BJ (cell line): ENCODE measurements at regions of chr19 and their contacts with region 1.

Region 1: DNA sequence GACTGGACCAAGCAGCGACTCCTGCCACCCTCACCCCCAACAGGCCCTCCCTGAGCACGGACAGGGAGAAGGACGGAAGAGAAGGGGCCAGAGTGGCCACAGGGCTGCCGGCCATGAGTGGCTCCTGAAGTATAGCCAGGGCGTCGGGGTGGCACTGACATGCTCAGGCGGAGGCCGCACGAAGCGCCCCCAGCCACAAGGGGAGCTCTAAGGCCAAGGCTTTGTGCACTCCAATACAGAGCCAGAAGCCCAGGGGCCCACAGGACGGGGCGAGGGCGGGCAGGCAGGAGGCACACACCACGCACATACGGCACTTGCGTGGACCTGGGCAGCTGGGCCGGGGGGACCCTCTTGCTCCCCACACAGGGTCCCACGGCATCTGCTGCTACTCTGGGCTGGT is 52.0 kb downstream of the KLF2 start:
- DNase-seq: no peak
- H3K4me3 ChIP-seq: no peak overlapping the region
- H3K27me3 ChIP-seq: no peaks in the 10 kb centered on the region
- CTCF ChIP-seq: peak; percentile 46

Region 2: DNA sequence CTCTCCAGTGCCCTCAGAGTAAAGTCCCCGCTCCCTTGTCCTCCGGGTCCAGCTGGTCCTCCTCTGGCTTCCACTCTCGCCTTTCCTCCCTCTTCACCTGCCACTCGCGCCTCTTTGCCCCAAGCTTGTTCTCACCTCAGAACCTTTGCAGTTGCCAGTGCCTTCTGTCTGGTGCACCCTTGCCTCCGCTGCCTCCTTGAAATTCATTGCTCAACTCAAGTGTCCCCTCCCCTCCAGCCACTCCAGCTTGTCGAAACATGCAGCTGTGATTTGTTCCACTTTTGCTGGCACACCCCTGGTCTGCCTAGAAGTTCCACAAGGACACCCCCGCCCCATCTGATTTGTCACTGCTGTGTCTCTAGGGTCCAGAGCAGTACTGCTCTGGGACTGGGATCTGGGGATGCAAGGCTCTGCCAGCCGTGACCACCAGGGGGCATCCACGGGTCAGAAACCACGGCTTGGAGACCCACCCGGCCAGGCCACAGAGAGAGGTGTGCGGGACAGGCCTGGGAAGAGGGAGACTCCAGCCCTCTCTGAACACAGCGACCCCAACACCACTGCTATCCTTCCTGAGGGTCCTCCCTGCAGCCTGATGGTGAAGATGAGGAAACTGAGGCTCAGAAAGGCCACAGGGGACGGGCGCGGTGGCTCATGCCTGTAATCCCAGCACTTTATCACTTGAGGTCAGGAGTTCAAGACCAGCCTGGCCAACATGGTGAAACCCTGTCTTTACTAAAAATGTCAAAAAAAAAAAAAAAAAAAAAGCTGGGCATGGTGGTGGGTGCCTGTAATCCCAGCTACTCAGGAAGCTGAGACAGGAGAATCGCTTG is 129.1 kb before region 1 on chr19:
- CTCF ChIA-PET with region 1: interaction called, 146 read pairs
- POLR2A ChIA-PET with region 1: no interaction called
- DNase-seq: no peak
- H3K4me3 ChIP-seq: no peak overlapping the region
- H3K27me3 ChIP-seq: peaks cover 1% of the 10 kb centered on the region; the same call in 1 of the 2 replicates
- CTCF ChIP-seq: peak; percentile 96